ENCODE measurements at regions of chr2 and their contacts with region 1.

Region 1: DNA sequence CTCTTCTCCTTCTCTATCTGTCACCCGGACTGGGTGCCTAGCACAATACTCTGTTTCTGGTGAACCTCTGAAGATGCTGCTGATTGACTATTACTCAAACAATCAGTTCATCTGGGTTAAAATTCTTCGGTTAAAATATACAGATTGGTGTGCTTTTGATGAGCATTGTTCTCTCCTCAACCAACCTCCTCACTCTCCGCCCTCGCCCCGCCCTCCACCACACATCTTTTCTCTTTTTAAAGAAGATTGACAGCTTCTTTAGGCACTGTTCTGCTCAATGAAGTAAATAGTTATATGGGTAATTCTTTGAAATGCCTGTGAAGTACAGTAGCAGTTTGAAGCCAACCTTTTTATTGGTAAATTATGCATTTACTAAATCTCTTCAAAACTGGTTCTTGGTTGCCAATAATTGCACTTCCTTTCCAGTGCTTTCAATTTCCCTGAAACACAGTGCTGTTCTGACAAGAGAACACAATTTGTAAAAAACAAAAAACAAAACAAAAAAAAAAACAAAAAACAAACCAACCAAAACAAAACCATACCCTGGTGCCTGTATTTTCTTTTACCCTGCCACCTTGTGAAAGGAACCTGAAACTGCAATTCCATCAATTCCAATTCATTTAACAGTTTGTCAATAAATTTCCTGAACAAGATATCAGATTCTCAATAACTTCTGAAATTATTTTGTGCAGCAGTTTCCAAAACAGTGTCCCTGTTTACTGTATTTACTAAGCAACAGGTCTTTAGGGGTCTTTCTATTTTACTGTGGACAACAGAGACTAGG is 188.6 kb downstream of the LRP1B start:
- DNase-seq: no peak
- H3K4me3 Mint-ChIP-seq: no peak overlapping the region
- H3K27ac Mint-ChIP-seq: no peak overlapping the region
- H3K4me1 Mint-ChIP-seq: no peaks in the 10 kb centered on the region
- H3K27me3 Mint-ChIP-seq: no peaks in the 10 kb centered on the region
- CTCF ChIP-seq: no peak

Region 2: GRCh38 chr2:142130111-142131009 is 188.2 kb after region 1 on chr2:
- CTCF ChIA-PET with region 1: no interaction called
- intact Hi-C with region 1: loop called (anchors 10 kb)
- DNase-seq: peak; percentile 26
- H3K4me3 Mint-ChIP-seq: peak overlapping the region; percentile 87
- H3K27ac Mint-ChIP-seq: peak overlapping the region; percentile 11
- H3K4me1 Mint-ChIP-seq: peaks cover 8% of the 10 kb centered on the region
- H3K27me3 Mint-ChIP-seq: no peaks in the 10 kb centered on the region
- CTCF ChIP-seq: no peak

Region 3: GRCh38 chr2:142892715-142893114 is 950.5 kb after region 1 on chr2:
- CTCF ChIA-PET with region 1: no interaction called
- intact Hi-C with region 1: no loop called
- DNase-seq: no peak
- H3K4me3 Mint-ChIP-seq: no peak overlapping the region
- H3K27ac Mint-ChIP-seq: peak overlapping the region; percentile 75
- H3K4me1 Mint-ChIP-seq: peaks cover 47% of the 10 kb centered on the region
- H3K27me3 Mint-ChIP-seq: no peaks in the 10 kb centered on the region
- CTCF ChIP-seq: no peak